Dendritic cell treated with granulocyte-macrophage colony-stimulating factor and Interleukin-4, amounts not matched to agents 40 ng/mL and 50 ng/mL, for 4 days (primary cell): ENCODE measurements at regions of chr3 and their contacts with region 1.

Region 1: GRCh38 chr3:58008140-58009025 is at the start of gene FLNB:
- H3K4me3 Mint-ChIP-seq: peak within 1 kb of the TSS; percentile 87
- H3K27ac Mint-ChIP-seq: peak within 1 kb of the TSS; percentile 78
- H3K4me1 Mint-ChIP-seq: peaks cover 33% of the 10 kb centered on the region
- H3K27me3 Mint-ChIP-seq: peaks cover 5% of the 10 kb centered on the region

Region 2: GRCh38 chr3:58177747-58178527 is 169.6 kb after region 1 on chr3:
- intact Hi-C with region 1: loop called (anchors 5 kb)
- H3K4me3 Mint-ChIP-seq: peak overlapping the region; percentile 71
- H3K27ac Mint-ChIP-seq: peak overlapping the region; percentile 63
- H3K4me1 Mint-ChIP-seq: peaks cover 41% of the 10 kb centered on the region
- H3K27me3 Mint-ChIP-seq: peaks cover 24% of the 10 kb centered on the region

Region 3: DNA sequence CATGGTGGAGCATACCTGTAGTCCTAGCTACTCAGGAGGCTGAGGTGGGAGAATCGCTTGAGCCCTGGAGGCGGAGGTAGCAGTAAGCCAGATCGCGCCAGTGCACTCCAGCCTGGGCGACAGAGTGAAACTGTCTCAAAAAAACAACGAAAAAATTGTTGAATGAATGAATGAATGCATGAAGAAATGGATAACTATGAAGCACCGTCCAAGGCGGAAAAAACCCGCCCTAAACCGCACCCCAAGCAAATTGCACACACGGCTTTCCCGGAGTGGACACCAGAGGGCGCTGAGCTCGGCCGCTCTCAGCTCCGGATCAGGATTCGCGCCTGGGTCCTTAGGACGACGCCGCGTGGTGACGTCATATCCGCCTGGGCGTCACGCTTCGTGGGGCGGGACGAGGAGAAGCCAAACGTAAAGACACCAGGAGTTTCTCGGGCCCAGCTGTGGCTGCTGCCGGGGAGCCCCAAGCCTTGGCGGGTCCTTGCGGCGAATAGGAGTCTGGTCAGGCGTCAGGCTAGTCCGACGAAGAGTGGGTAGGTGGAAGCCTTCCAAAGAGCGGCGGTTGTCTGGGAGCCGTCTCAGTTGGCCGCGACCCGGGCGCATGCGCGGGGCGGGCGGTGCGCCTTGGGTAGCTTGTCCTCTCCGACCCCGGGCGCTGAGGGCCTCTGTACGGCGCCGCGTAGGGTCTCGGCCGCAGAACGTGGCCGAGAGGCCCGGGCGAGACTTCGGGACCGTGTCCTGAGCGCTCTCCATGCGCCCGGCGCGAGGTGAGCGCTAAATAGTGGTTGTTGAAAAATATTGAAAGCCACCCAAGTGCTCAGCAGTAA is 297.7 kb after region 1 on chr3 and contains the starts of genes HTD2 and RPP14:
- intact Hi-C with region 1: loop called (anchors 10 kb)
- H3K4me3 Mint-ChIP-seq: peak within 1 kb of the TSS; percentile 86
- H3K27ac Mint-ChIP-seq: peak within 1 kb of the TSS; percentile 99
- H3K4me1 Mint-ChIP-seq: peaks cover 25% of the 10 kb centered on the region
- H3K27me3 Mint-ChIP-seq: peaks cover 9% of the 10 kb centered on the region